CD8-positive, alpha-beta T cell (primary cell): ENCODE measurements at regions of chr5 and their contacts with region 1.

Region 1: GRCh38 chr5:159262859-159263567 is at the start of gene UBLCP1:
- DNase-seq: peak; percentile 57 to 92 (median 80)
- ATAC-seq: peak; percentile 86
- H3K4me3 ChIP-seq: peak within 1 kb of the TSS; percentile 89 to 96
- H3K4me3 Mint-ChIP-seq: peak within 1 kb of the TSS; percentile 92
- H3K27ac ChIP-seq: peak within 1 kb of the TSS; percentile 97 to 99
- H3K27ac Mint-ChIP-seq: peak within 1 kb of the TSS; percentile 99
- H3K4me1 ChIP-seq: peaks cover 21% of the 10 kb centered on the region
- H3K4me1 Mint-ChIP-seq: peaks cover 55% of the 10 kb centered on the region
- H3K27me3 ChIP-seq: no peaks in the 10 kb centered on the region
- H3K27me3 Mint-ChIP-seq: no peaks in the 10 kb centered on the region
- CTCF ChIP-seq: no peak
- total RNA-seq, gene UBLCP1: 16.4 to 19.6 TPM

Region 2: DNA sequence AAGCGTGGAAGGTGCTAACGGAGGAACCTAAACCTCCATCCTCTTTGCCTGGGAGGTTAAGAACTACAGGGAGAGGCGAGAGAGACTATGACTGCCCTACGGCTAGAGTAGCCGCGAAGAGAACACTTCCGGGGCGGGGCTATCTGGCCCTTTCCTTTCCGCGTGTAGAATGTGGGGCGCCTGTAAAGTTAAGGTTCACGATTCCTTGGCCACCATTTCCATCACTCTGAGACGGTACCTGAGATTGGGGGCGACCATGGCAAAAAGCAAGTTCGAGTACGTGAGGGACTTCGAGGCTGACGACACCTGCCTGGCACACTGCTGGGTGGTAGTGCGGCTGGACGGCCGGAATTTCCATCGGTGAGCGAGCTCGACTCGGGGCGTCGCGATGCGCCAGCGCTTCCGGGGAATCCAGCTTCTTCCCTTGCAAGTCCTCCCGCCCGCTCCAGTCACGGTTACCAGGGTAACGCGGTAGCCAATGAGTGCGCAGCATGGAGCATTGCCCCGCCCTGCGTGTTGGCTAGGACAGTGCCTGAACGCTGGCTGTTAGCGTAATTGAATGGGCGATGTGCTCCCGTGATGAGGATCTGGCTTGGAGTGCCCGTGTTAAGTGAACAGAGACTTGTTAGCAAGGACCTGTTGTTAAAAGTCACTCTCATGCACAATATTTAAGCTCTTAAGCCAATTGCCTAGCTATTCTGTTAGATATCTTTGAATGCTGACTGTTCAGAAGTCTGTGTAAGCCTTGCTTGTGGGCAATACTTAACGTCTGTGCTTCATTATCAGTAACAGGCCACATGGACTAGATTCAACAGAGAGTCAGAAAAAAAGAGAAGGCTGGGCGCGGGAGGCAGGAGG is 1531.5 kb before region 1 on chr5 and contains the start of gene THG1L:
- CTCF ChIA-PET with region 1: no interaction called
- POLR2A ChIA-PET with region 1: no interaction called
- intact Hi-C with region 1: loop called in 1 of 2 experiments (anchors 5 kb)
- DNase-seq: peak; percentile 95 to 99 (median 97)
- ATAC-seq: peak; percentile 94
- H3K4me3 ChIP-seq: peak within 1 kb of the TSS; percentile 75 to 82
- H3K4me3 Mint-ChIP-seq: peak within 1 kb of the TSS; percentile 96
- H3K27ac ChIP-seq: peak within 1 kb of the TSS; percentile 68 to 86
- H3K27ac Mint-ChIP-seq: peak within 1 kb of the TSS; percentile 95
- H3K4me1 ChIP-seq: no peaks in the 10 kb centered on the region
- H3K4me1 Mint-ChIP-seq: peaks cover 14% of the 10 kb centered on the region
- H3K27me3 ChIP-seq: no peaks in the 10 kb centered on the region
- H3K27me3 Mint-ChIP-seq: no peaks in the 10 kb centered on the region
- CTCF ChIP-seq: no peak
- total RNA-seq, gene THG1L: 6.9 to 7.1 TPM

Region 3: GRCh38 chr5:159412284-159413046 is 149.5 kb after region 1 on chr5:
- CTCF ChIA-PET with region 1: interaction called, 3 read pairs
- POLR2A ChIA-PET with region 1: no interaction called
- intact Hi-C with region 1: loop called in 1 of 2 experiments (anchors 1 kb)
- DNase-seq: peak; percentile 49 to 94 (median 65)
- ATAC-seq: peak; percentile 90
- H3K4me3 ChIP-seq: no peak overlapping the region
- H3K4me3 Mint-ChIP-seq: peak overlapping the region; percentile 9
- H3K27ac ChIP-seq: peak overlapping the region; percentile 13 to 47
- H3K27ac Mint-ChIP-seq: peak overlapping the region; percentile 68
- H3K4me1 ChIP-seq: peaks cover 26% of the 10 kb centered on the region
- H3K4me1 Mint-ChIP-seq: peaks cover 40% of the 10 kb centered on the region
- H3K27me3 ChIP-seq: no peaks in the 10 kb centered on the region
- H3K27me3 Mint-ChIP-seq: no peaks in the 10 kb centered on the region
- CTCF ChIP-seq: no peak

Region 4: GRCh38 chr5:160008877-160009590 is 746.0 kb after region 1 on chr5 and contains the start of gene TTC1:
- CTCF ChIA-PET with region 1: no interaction called
- POLR2A ChIA-PET with region 1: no interaction called
- intact Hi-C with region 1: loop called (anchors 2 kb)
- DNase-seq: peak; percentile 82 to 99 (median 93)
- ATAC-seq: peak; percentile 96
- H3K4me3 ChIP-seq: peak within 1 kb of the TSS; percentile 84 to 92
- H3K4me3 Mint-ChIP-seq: peak within 1 kb of the TSS; percentile 99
- H3K27ac ChIP-seq: peak within 1 kb of the TSS; percentile 86 to 89
- H3K27ac Mint-ChIP-seq: peak within 1 kb of the TSS; percentile 99
- H3K4me1 ChIP-seq: peaks cover 25% of the 10 kb centered on the region
- H3K4me1 Mint-ChIP-seq: peaks cover 31% of the 10 kb centered on the region
- H3K27me3 ChIP-seq: peaks cover 0 to 2% of the 10 kb centered on the region in 2 experiments
- H3K27me3 Mint-ChIP-seq: no peaks in the 10 kb centered on the region
- CTCF ChIP-seq: no peak
- total RNA-seq, gene TTC1: 12.6 to 14.3 TPM

Region 5: GRCh38 chr5:160418561-160419457 is 1155.8 kb after region 1 on chr5 and contains the start of gene SLU7:
- CTCF ChIA-PET with region 1: no interaction called
- POLR2A ChIA-PET with region 1: no interaction called
- intact Hi-C with region 1: loop called (anchors 1 to 10 kb)
- DNase-seq: peak; percentile 88 to 96 (median 92)
- ATAC-seq: peak; percentile 79
- H3K4me3 ChIP-seq: peak within 1 kb of the TSS; percentile 59 to 95
- H3K4me3 Mint-ChIP-seq: peak within 1 kb of the TSS; percentile 95
- H3K27ac ChIP-seq: peak within 1 kb of the TSS; percentile 81 to 93
- H3K27ac Mint-ChIP-seq: peak within 1 kb of the TSS; percentile 98
- H3K4me1 ChIP-seq: peaks cover 32% of the 10 kb centered on the region
- H3K4me1 Mint-ChIP-seq: peaks cover 76% of the 10 kb centered on the region
- H3K27me3 ChIP-seq: no peaks in the 10 kb centered on the region
- H3K27me3 Mint-ChIP-seq: no peaks in the 10 kb centered on the region
- CTCF ChIP-seq: no peak
- total RNA-seq, gene SLU7: 127 to 136 TPM